ENCODE measurements at regions of chr16 and their contacts with region 1.

Region 1: GRCh38 chr16:13012601-13013000 is 111.2 kb downstream of the SHISA9 start:
- ATAC-seq: peak in 4 of 8 experiments; percentile 41 to 77 (median 74)
- H3K4me3 ChIP-seq: no peak overlapping the region
- H3K27ac ChIP-seq: no peak overlapping the region
- H3K4me1 ChIP-seq: peaks cover 0 to 2% of the 10 kb centered on the region in 2 donors

Region 2: GRCh38 chr16:13110124-13110796 is 97.7 kb after region 1 on chr16:
- in situ Hi-C with region 1: loop called in 1 of 9 experiments (anchors 25 kb)
- ATAC-seq: no peak
- H3K4me3 ChIP-seq: no peak overlapping the region
- H3K27ac ChIP-seq: no peak overlapping the region
- H3K4me1 ChIP-seq: no peaks in the 10 kb centered on the region